ENCODE measurements at regions of chr12 and their contacts with region 1.

Region 1: DNA sequence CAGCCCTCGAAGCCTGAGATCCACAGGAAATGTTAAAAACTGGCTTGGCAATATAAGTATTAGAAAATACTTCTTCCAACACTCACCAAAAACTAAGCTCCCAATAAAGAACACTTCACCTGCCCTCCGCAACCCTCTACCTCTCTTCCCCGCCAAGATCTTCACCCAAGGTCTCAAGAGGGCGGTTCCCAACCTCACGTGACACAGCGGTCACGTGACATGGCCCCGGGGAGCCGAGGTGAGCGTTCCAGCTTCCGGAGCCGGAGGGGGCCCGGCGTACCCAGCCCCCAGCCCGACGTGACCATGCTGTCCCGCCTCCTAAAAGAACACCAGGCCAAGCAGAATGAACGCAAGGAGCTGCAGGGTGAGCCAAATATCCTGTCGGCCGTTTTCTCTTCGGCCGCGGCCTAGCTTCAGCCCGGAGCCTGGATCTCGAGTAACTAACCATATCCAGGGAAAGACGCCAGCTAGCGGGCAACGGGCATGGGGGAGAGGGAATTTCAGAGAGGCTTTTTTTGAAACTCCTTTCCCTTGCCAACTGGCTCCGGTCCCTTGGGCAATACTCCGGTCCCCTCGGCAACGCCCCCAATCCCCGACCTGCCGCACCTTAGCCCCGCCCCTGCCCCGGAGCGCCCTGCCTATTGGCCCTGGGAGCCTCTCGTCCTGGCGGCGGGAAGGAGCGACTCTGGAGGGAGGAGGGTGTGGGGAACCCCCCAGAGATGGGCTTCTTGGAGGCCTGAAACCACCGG is at the start of gene BLOC1S1:
- DNase-seq: peak; percentile 75 to 92
- H3K4me3 ChIP-seq: peak within 1 kb of the TSS; percentile 100
- H3K27ac ChIP-seq: peak within 1 kb of the TSS; percentile 87
- H3K4me1 ChIP-seq: peaks cover 36% of the 10 kb centered on the region
- H3K27me3 ChIP-seq: peaks cover 12% of the 10 kb centered on the region; the same call in 1 of the 2 replicates
- CTCF ChIP-seq: no peak
- total RNA-seq, gene BLOC1S1: 81.1 and 101 TPM in 2 replicates

Region 2: GRCh38 chr12:55659486-55660385 is 56.3 kb before region 1 on chr12:
- CTCF ChIA-PET with region 1: interaction called, 4 read pairs
- POLR2A ChIA-PET with region 1: no interaction called
- intact Hi-C with region 1: loop called (anchors 1 kb)
- DNase-seq: peak in 1 of 2 experiments; percentile 14
- H3K4me3 ChIP-seq: no peak overlapping the region
- H3K27ac ChIP-seq: no peak overlapping the region
- H3K4me1 ChIP-seq: no peaks in the 10 kb centered on the region
- H3K27me3 ChIP-seq: peaks cover 5% of the 10 kb centered on the region; the same call in 1 of the 2 replicates
- CTCF ChIP-seq: peak; percentile 58

Region 3: DNA sequence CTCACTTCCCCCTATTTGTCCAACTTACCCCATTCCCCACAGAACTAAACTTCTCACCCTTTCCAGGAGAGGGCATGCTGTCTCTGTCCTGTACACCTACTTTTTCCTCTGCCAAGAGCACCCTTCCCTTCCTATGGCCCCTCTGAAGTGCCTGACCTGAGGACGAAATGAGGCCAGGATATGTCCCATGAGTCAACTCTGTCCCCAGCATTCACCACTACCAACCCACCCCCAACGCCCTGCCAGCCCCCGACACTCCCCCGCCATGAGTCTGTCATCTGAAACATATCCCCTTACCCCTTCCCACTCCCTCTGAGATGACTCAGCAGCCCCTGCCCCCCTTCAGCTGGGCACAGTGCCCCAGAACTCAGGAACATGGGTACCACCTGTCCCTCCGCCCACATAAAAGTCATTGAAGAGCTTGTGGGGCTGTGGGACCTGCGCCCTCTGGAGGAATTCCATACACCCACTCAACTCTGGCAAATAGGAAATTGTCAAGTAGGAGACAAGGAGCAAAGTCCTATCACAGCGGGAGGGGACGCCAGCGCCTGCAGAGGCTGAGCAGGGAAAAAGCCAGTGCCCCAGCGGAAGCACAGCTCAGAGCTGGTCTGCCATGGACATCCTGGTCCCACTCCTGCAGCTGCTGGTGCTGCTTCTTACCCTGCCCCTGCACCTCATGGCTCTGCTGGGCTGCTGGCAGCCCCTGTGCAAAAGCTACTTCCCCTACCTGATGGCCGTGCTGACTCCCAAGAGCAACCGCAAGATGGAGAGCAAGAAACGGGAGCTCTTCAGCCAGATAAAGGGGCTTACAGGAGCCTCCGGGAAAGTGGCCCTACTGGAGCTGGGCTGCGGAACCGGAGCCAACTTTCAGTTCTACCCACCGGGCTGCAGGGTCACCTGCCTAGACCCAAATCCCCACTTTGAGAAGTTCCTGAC is 34.6 kb before region 1 on chr12:
- CTCF ChIA-PET with region 1: interaction called, 9 read pairs
- POLR2A ChIA-PET with region 1: interaction called, 33 read pairs
- intact Hi-C with region 1: loop called (anchors 1 kb)
- DNase-seq: peak; percentile 37 to 47
- H3K4me3 ChIP-seq: peak overlapping the region; percentile 21; the same call in 1 of the 2 replicates
- H3K27ac ChIP-seq: no peak overlapping the region
- H3K4me1 ChIP-seq: no peaks in the 10 kb centered on the region
- H3K27me3 ChIP-seq: peaks cover 49% of the 10 kb centered on the region
- CTCF ChIP-seq: no peak; the same call in 1 of the 2 replicates

Region 4: GRCh38 chr12:55908726-55909512 is 192.9 kb after region 1 on chr12:
- CTCF ChIA-PET with region 1: interaction called, 11 read pairs
- POLR2A ChIA-PET with region 1: no interaction called
- intact Hi-C with region 1: no loop called
- DNase-seq: no peak
- H3K4me3 ChIP-seq: no peak overlapping the region
- H3K27ac ChIP-seq: no peak overlapping the region
- H3K4me1 ChIP-seq: no peaks in the 10 kb centered on the region
- H3K27me3 ChIP-seq: no peaks in the 10 kb centered on the region
- CTCF ChIP-seq: no peak